Activated naive CD4-positive, alpha-beta T cell treated with anti-CD3 and anti-CD28 coated beads, Interleukin-2, amount 10 ng/mL, durations not matched to agents 7 days and 5 days (primary cell): ENCODE measurements at regions of chr2 and their contacts with region 1.

Region 1: DNA sequence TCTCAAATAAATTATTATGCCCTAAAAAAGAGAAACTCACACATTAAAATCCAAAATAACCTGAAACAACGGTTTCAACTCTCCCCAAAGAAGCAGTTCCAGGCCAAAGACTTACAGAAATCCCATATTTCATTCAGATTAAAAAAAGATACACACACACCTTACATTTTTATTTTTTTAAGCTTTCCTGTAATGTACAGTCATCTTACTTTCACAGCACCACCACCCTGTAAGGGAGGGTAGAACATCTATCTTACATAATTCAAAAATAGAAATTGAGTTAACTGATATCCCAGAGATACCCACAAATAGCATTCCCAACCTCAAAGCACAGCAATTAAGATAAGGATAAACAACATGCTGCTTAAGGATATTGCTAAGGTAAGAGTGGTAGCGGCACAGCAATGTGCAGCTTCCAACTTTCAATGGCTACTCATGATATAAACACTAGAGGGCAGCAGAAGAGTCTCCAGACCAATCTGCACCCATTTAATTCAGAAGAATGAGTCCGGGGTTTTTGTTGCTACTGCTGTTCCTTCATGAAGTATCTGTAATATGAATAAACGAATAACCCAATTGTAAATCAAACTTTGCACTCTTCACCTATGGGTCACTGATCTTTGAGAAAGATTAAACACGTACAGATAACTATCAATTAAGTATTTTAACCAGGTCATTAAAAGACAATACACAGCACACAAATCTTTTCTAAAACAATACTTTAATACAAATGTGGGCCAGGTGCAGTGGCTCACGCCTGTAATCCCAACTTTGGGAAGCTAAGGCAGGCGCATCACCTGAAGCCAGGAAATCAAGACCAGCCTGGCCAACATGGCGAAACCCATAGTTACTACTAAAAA is 11.3 kb downstream of the GFPT1 start:
- DNase-seq: no peak
- H3K4me3 Mint-ChIP-seq: no peak overlapping the region
- H3K27ac Mint-ChIP-seq: no peak overlapping the region
- H3K4me1 Mint-ChIP-seq: peaks cover 12% of the 10 kb centered on the region
- H3K27me3 Mint-ChIP-seq: no peaks in the 10 kb centered on the region

Region 2: GRCh38 chr2:69359371-69359770 is 16.4 kb before region 1 on chr2:
- CTCF ChIA-PET with region 1: interaction called, 17 read pairs
- DNase-seq: no peak
- H3K4me3 Mint-ChIP-seq: no peak overlapping the region
- H3K27ac Mint-ChIP-seq: no peak overlapping the region
- H3K4me1 Mint-ChIP-seq: peaks cover 7% of the 10 kb centered on the region
- H3K27me3 Mint-ChIP-seq: no peaks in the 10 kb centered on the region

Region 3: DNA sequence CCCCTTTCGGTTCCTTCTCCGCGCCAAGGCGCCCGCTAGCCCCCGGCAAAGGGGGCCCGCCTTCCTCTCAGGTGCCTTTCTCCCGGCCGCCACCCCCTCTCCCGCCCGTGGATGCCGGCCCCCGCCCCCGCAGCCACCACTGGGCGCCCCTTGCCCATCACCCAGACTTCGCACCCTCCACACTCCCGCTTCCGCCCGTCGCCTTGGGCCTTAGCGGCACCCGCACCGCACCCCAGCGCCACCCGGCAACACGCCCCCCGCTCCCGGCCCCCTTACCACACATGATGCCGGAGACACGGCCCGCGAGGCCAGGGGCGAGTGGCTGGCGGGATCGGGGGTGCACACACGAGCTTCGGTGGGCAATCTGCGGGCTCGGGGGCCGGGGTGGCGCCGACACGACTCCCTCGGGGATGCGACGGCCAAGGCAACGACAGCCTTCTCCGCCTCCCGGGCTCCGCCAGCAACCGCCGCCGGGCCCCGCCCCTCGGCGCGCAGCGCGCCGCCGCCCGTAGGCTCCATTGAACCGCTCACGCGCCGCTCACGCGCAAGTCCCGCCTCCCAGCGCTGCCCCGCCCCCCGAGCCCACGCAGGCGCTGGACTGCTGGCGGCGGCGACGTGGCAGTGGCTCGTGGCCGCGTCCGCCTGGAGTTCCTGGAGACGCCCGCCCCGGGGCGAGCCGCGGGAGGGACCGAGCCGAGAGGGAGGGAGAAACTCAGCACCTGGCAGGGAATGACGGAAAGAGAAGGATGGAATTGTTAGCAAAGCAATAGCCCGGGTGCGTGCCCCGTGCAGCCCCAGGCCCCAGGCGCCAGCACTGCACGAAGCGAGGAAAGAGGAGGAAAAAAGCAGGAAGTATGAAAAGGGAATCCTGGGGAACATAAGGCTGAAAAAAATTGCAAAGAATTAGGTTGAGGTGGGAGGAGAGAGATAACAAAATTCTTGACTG is 11.3 kb after region 1 on chr2 and contains the start of gene GFPT1:
- CTCF ChIA-PET with region 1: interaction called, 16 read pairs
- DNase-seq: peak; percentile 95
- H3K4me3 Mint-ChIP-seq: peak within 1 kb of the TSS; percentile 87
- H3K27ac Mint-ChIP-seq: peak within 1 kb of the TSS; percentile 84
- H3K4me1 Mint-ChIP-seq: peaks cover 46% of the 10 kb centered on the region
- H3K27me3 Mint-ChIP-seq: no peaks in the 10 kb centered on the region

Region 4: GRCh38 chr2:69422198-69422597 is 46.5 kb after region 1 on chr2:
- CTCF ChIA-PET with region 1: no interaction called
- DNase-seq: no peak
- H3K4me3 Mint-ChIP-seq: no peak overlapping the region
- H3K27ac Mint-ChIP-seq: no peak overlapping the region
- H3K4me1 Mint-ChIP-seq: no peaks in the 10 kb centered on the region
- H3K27me3 Mint-ChIP-seq: no peaks in the 10 kb centered on the region

Region 5: DNA sequence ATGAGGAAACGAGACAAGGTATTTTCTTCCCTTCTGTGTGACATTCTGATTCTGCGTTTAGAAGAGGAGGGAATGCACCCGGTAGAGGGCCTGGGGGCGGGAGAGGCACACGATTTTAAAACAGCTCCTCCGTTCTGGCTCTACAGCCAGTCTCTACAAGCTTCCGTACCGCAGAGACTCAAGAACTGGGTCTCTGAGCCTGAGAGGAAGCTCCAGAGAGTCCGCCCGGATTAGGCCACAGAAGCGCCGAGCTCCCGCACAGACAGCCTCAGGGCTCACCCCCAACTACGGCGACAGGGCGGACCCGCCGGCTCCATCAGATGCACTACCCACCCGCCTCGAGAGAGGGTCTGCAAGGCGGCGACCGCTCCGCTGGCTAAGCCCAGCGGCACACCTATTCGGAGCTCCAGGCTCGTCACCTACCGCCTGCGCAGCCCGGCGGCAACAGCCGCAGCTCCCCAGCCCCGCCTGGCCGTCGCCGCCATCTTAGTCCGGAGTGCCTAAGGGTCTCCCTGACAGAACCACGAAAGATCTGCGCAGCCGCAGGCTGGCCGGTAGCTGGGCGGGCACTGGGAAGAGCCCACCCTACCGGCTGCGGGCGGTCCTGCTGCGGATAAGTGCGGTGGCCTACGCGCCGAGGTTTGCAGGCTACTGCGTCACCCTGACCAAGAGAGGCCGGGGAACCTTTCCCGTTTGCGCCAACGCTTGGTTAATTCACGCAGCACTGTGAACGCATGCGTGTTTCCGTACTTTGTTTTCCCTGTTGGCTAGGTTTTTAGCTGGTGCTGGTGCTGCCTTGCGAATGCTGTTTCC is 61.4 kb after region 1 on chr2 and contains the start of gene NFU1:
- CTCF ChIA-PET with region 1: interaction called, 14 read pairs
- DNase-seq: peak; percentile 88
- H3K4me3 Mint-ChIP-seq: peak within 1 kb of the TSS; percentile 95
- H3K27ac Mint-ChIP-seq: peak within 1 kb of the TSS; percentile 99
- H3K4me1 Mint-ChIP-seq: peaks cover 32% of the 10 kb centered on the region
- H3K27me3 Mint-ChIP-seq: no peaks in the 10 kb centered on the region